ENCODE measurements at regions of chr15 and their contacts with region 1.

Region 1: GRCh38 chr15:81000624-81001151 is at the start of gene TLNRD1:
- DNase-seq: peak; percentile 91
- H3K4me3 Mint-ChIP-seq: peak within 1 kb of the TSS; percentile 82
- H3K27ac Mint-ChIP-seq: peak within 1 kb of the TSS; percentile 64
- H3K4me1 Mint-ChIP-seq: peaks cover 25% of the 10 kb centered on the region
- H3K27me3 Mint-ChIP-seq: no peaks in the 10 kb centered on the region
- CTCF ChIP-seq: no peak
- total RNA-seq, gene TLNRD1: 17.1 and 18.3 TPM in 2 replicates

Region 2: GRCh38 chr15:80878242-80879228 is 122.2 kb before region 1 on chr15:
- CTCF ChIA-PET with region 1: no interaction called
- POLR2A ChIA-PET with region 1: no interaction called
- intact Hi-C with region 1: no loop called
- DNase-seq: no peak
- H3K4me3 Mint-ChIP-seq: no peak overlapping the region
- H3K27ac Mint-ChIP-seq: no peak overlapping the region
- H3K4me1 Mint-ChIP-seq: peaks cover 18% of the 10 kb centered on the region
- H3K27me3 Mint-ChIP-seq: no peaks in the 10 kb centered on the region
- CTCF ChIP-seq: no peak

Region 3: DNA sequence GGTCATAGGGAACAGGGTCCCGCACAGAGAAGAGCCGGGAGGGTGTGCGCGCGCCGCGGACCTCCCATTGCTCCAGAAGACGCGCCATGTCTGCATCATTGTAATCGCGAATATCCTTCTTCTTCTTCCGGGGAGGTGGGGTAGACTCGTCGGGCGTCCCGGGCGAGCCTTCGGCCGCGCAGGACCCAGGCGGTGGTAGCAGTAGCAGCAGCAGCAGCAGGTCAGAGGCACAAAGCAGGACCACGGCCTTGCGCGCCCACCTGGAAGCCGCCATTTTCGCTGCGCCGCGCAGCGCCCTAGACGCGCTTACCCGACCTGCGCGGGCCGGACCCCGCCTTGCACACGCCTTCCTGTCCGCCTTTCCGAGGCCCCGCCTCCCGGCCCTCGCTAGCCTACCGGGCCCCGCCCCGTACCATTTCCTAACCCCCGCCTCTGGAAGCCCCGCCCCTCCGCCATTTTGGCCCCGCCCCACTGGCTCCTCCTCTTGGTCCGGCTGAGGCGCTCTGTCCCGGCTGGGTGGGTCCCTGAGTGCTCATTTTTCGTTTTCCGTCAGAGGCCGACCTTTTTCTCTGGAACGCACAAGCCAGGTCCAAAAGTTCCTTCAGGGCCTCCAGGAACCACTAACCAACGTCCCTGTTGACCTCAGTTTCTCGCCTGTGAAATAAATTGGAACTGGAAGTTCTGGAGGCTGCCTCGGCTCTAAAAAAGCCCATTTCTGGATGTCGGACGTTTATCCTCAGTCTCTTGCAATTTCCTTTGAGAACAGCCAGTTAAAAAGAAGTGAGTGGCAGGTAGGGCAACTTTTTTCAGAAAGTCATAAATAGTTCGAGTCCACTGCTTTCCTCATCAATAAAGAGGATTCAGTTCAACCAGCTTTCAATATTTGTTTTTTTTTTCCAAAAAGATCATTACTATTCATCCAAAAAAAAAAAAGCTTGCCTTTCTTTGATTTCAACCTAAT is 10.9 kb before region 1 on chr15 and contains the start of gene MESD:
- CTCF ChIA-PET with region 1: interaction called, 5 read pairs
- POLR2A ChIA-PET with region 1: interaction called, 76 read pairs
- intact Hi-C with region 1: no loop called
- DNase-seq: peak; percentile 94
- H3K4me3 Mint-ChIP-seq: peak within 1 kb of the TSS; percentile 93
- H3K27ac Mint-ChIP-seq: peak within 1 kb of the TSS; percentile 95
- H3K4me1 Mint-ChIP-seq: peaks cover 38% of the 10 kb centered on the region
- H3K27me3 Mint-ChIP-seq: no peaks in the 10 kb centered on the region
- CTCF ChIP-seq: no peak
- total RNA-seq, gene MESD: 29.7 and 30.2 TPM in 2 replicates

Region 4: GRCh38 chr15:81038975-81039607 is 38.4 kb after region 1 on chr15:
- CTCF ChIA-PET with region 1: no interaction called
- POLR2A ChIA-PET with region 1: interaction called, 18 read pairs
- intact Hi-C with region 1: no loop called
- DNase-seq: peak; percentile 60
- H3K4me3 Mint-ChIP-seq: no peak overlapping the region
- H3K27ac Mint-ChIP-seq: peak overlapping the region; percentile 52
- H3K4me1 Mint-ChIP-seq: peaks cover 15% of the 10 kb centered on the region
- H3K27me3 Mint-ChIP-seq: no peaks in the 10 kb centered on the region
- CTCF ChIP-seq: no peak